Activated B cell treated with CpG ODN at 0.5 μM for 24 hours (primary cell): ENCODE measurements at regions of chr17 and their contacts with region 1.

Region 1: GRCh38 chr17:49370971-49371834 is 9.2 kb upstream of the ZNF652 start:
- DNase-seq: no peak
- ATAC-seq: no peak
- H3K4me3 Mint-ChIP-seq: no peak overlapping the region
- H3K27ac Mint-ChIP-seq: no peak overlapping the region
- H3K4me1 Mint-ChIP-seq: peaks cover 63% of the 10 kb centered on the region
- H3K27me3 Mint-ChIP-seq: no peaks in the 10 kb centered on the region
- CTCF ChIP-seq: no peak

Region 2: GRCh38 chr17:49390548-49391324 is 19.5 kb after region 1 on chr17:
- CTCF ChIA-PET with region 1: interaction called, 10 read pairs
- POLR2A ChIA-PET with region 1: interaction called, 12 read pairs
- intact Hi-C with region 1: no loop called
- DNase-seq: peak; percentile 29
- ATAC-seq: peak; percentile 51
- H3K4me3 Mint-ChIP-seq: peak overlapping the region; percentile 77
- H3K27ac Mint-ChIP-seq: peak overlapping the region; percentile 98
- H3K4me1 Mint-ChIP-seq: peaks cover 77% of the 10 kb centered on the region
- H3K27me3 Mint-ChIP-seq: no peaks in the 10 kb centered on the region
- CTCF ChIP-seq: no peak

Region 3: DNA sequence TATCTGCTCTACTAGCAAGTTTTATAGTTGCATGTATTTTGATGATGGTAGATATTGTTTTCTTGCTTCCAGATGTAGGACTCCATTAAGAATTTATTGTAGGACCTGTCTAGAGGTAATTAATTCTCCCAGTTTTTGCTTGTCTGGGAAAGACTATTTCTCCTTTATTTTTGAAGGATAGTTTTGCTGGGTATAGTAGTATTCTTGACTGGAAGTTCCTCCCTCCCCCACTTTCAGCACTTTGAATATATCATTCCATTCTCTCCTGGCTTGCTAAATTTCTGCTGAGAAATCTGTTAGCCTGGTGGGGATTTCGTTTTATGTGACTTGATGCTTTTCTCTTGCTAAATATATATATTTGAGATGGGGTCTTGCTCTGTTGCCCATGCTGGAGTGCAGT is 51.5 kb after region 1 on chr17:
- CTCF ChIA-PET with region 1: no interaction called
- POLR2A ChIA-PET with region 1: no interaction called
- intact Hi-C with region 1: no loop called
- DNase-seq: no peak
- ATAC-seq: no peak
- H3K4me3 Mint-ChIP-seq: no peak overlapping the region
- H3K27ac Mint-ChIP-seq: no peak overlapping the region
- H3K4me1 Mint-ChIP-seq: no peaks in the 10 kb centered on the region
- H3K27me3 Mint-ChIP-seq: peaks cover 14% of the 10 kb centered on the region
- CTCF ChIP-seq: no peak

Region 4: DNA sequence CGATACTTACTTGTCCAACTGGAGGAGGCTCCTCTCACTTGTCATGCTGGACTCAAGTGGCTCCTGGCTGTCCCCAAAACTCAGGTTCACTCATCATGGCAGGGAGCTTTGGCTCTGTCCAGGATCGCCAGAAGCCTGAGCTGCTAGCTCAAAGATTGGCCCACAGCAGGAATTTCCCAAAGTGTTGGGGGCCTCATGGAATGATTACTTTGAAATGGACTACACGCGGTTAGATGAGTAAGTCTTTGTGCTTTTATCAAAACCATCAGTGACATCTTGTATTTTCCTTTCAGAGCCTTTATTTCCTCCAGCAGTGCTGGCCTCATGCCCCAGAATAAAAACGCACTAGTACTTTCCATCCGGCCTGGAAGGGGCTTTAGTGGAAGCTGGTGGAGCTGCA is 72.7 kb after region 1 on chr17:
- CTCF ChIA-PET with region 1: no interaction called
- POLR2A ChIA-PET with region 1: no interaction called
- intact Hi-C with region 1: no loop called
- DNase-seq: no peak
- ATAC-seq: no peak
- H3K4me3 Mint-ChIP-seq: no peak overlapping the region
- H3K27ac Mint-ChIP-seq: no peak overlapping the region
- H3K4me1 Mint-ChIP-seq: peaks cover 7% of the 10 kb centered on the region
- H3K27me3 Mint-ChIP-seq: peaks cover 30% of the 10 kb centered on the region
- CTCF ChIP-seq: no peak